Caco-2 (cell line): ENCODE measurements at regions of chr11 and their contacts with region 1.

Region 1: GRCh38 chr11:13836666-13837065 is 125.9 kb upstream of the SPON1 start:
- DNase-seq: no peak
- H3K4me3 ChIP-seq: no peak overlapping the region
- H3K4me3 Mint-ChIP-seq: no peak overlapping the region
- H3K27ac Mint-ChIP-seq: no peak overlapping the region
- H3K4me1 ChIP-seq: no peaks in the 10 kb centered on the region
- H3K4me1 Mint-ChIP-seq: no peaks in the 10 kb centered on the region
- H3K27me3 ChIP-seq: no peaks in the 10 kb centered on the region
- H3K27me3 Mint-ChIP-seq: peaks cover 18% of the 10 kb centered on the region
- CTCF ChIP-seq: no peak

Region 2: DNA sequence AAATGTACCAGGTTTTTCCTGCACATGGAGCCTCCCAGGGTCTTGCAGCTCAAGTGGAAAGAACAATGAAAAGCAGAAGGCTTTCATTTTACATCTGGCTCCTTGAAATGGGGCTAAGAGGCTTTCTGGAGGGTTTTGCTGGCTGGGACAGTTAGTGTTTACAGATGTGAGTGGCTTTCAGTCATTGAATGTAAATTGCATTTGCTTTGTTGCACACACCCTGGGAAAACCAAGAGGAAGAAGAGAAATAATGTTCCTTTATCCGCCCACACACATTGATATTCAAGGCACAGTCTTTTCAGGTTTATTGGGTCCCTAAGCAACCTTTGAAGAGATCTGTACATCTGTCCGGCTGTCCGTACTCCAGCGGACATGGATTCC is 270.4 kb after region 1 on chr11:
- CTCF ChIA-PET with region 1: interaction called, 12 read pairs
- POLR2A ChIA-PET with region 1: no interaction called
- intact Hi-C with region 1: no loop called
- DNase-seq: no peak
- H3K4me3 ChIP-seq: no peak overlapping the region
- H3K4me3 Mint-ChIP-seq: no peak overlapping the region
- H3K27ac Mint-ChIP-seq: no peak overlapping the region
- H3K4me1 ChIP-seq: no peaks in the 10 kb centered on the region
- H3K4me1 Mint-ChIP-seq: no peaks in the 10 kb centered on the region
- H3K27me3 ChIP-seq: no peaks in the 10 kb centered on the region
- H3K27me3 Mint-ChIP-seq: no peaks in the 10 kb centered on the region
- CTCF ChIP-seq: no peak